ENCODE measurements at regions of chr6 and their contacts with region 1.

Region 1: DNA sequence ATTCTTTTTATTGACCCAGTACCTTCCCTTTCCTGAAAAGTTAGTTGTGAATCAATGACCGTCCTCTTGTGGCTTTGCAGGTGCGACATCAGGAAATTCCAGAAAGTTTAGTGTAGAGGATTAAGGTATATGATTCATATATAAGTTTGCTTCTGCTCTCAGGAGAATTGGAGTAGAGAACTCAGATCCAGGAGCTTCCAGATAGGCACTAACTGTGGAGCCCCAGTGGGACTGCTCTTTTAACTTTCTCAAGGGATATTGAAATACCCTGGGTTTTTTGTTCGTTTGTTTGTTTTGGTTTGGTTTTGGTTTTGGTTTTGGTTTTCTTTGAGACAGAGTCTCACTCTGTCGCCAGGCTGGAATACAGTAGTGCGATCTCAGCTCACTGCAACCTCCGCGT is 9.5 kb downstream of the TAAR2 start:
- DNase-seq: peak; percentile 57
- H3K4me3 Mint-ChIP-seq: peak overlapping the region; percentile 77
- H3K27ac Mint-ChIP-seq: peak overlapping the region; percentile 98
- H3K4me1 Mint-ChIP-seq: peaks cover 54% of the 10 kb centered on the region
- H3K27me3 Mint-ChIP-seq: no peaks in the 10 kb centered on the region
- CTCF ChIP-seq: no peak

Region 2: GRCh38 chr6:132530293-132530974 is 84.1 kb before region 1 on chr6:
- CTCF ChIA-PET with region 1: interaction called, 7 read pairs
- intact Hi-C with region 1: loop called (anchors 5 kb)
- DNase-seq: peak; percentile 76
- H3K4me3 Mint-ChIP-seq: peak overlapping the region; percentile 37
- H3K27ac Mint-ChIP-seq: peak overlapping the region; percentile 50
- H3K4me1 Mint-ChIP-seq: no peaks in the 10 kb centered on the region
- H3K27me3 Mint-ChIP-seq: no peaks in the 10 kb centered on the region
- CTCF ChIP-seq: peak; percentile 64

Region 3: DNA sequence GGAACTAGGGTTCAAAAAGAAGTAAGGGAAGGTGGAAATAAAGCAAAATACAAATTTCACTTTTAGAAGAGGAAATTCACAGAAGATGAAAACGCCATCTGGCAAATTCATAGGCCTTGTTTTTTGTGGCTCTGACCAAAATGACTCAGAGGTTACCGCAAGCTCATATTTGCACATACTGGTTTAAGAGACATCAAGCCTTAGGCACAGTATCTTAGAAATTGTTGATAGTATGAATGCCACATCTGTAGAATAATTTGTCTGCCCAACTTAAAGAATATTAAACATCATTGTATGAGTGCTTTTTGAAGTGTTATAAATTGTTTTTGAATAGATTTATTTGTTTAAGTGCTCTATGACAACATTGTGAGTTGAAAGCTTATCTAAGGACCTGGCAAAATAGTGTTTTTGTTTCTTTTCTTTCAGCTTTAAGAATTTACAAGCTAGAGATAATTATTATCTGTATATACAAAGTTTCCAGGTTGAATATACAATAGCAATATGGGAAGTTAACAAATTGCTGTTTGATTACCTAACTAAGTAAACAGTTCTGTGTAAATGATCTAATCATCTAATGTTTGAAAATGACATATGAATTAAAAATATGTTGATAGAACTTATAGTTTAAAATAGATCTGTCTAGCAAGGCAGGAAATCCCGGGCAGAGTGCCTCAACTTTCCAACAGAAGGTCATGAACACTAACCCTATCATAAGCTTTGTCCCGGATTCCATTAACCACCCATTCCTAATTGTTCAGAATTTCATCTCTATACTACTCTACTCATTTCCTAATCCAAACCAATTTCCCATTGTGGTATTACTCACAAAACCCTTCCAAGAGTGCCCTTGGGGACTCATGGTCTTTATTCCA is 34.0 kb after region 1 on chr6:
- CTCF ChIA-PET with region 1: no interaction called
- intact Hi-C with region 1: loop called (anchors 5 kb)
- DNase-seq: peak; percentile 22
- H3K4me3 Mint-ChIP-seq: no peak overlapping the region
- H3K27ac Mint-ChIP-seq: peak overlapping the region; percentile 66
- H3K4me1 Mint-ChIP-seq: no peaks in the 10 kb centered on the region
- H3K27me3 Mint-ChIP-seq: no peaks in the 10 kb centered on the region
- CTCF ChIP-seq: no peak

Region 4: DNA sequence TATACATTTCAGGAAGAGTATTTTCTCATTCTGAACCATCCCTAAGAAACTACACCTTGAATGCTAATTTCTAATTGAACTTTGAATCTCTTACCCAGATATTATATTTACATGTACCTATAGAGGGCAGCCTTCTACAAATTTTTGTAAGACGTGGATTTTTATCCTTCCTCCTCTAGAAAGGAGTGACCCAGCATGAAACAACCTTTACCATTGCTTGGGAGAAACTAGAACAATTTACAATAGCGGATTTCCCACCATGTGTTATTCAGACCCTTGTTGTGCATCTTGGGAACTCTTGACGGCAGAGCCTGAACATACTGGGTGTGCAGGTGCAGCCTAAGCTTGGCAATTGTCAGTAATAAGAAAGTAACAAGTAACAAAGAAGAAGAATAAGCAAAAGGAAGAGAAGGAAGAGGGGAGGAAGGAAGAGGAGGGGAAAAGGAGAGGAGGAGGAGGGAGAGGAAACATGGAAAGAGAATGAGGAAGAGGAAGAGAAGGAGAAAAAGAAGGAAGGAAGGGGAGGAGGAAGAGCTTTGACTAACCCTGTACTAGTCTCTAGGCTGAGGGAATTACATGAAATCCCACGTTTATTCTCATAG is 55.2 kb after region 1 on chr6:
- CTCF ChIA-PET with region 1: no interaction called
- intact Hi-C with region 1: loop called (anchors 5 kb)
- DNase-seq: no peak
- H3K4me3 Mint-ChIP-seq: no peak overlapping the region
- H3K27ac Mint-ChIP-seq: peak overlapping the region; percentile 59
- H3K4me1 Mint-ChIP-seq: peaks cover 54% of the 10 kb centered on the region
- H3K27me3 Mint-ChIP-seq: no peaks in the 10 kb centered on the region
- CTCF ChIP-seq: peak; percentile 30

Region 5: GRCh38 chr6:132687306-132687705 is 72.8 kb after region 1 on chr6:
- CTCF ChIA-PET with region 1: no interaction called
- intact Hi-C with region 1: loop called (anchors 5 kb)
- DNase-seq: peak; percentile 28
- H3K4me3 Mint-ChIP-seq: peak overlapping the region; percentile 53
- H3K27ac Mint-ChIP-seq: peak overlapping the region; percentile 96
- H3K4me1 Mint-ChIP-seq: peaks cover 53% of the 10 kb centered on the region
- H3K27me3 Mint-ChIP-seq: no peaks in the 10 kb centered on the region
- CTCF ChIP-seq: no peak

Region 6: GRCh38 chr6:132715204-132715603 is 100.7 kb after region 1 on chr6:
- CTCF ChIA-PET with region 1: interaction called, 6 read pairs
- intact Hi-C with region 1: loop called (anchors 10 kb)
- DNase-seq: peak; percentile 75
- H3K4me3 Mint-ChIP-seq: no peak overlapping the region
- H3K27ac Mint-ChIP-seq: peak overlapping the region; percentile 61
- H3K4me1 Mint-ChIP-seq: peaks cover 68% of the 10 kb centered on the region
- H3K27me3 Mint-ChIP-seq: no peaks in the 10 kb centered on the region
- CTCF ChIP-seq: peak; percentile 58

Region 7: DNA sequence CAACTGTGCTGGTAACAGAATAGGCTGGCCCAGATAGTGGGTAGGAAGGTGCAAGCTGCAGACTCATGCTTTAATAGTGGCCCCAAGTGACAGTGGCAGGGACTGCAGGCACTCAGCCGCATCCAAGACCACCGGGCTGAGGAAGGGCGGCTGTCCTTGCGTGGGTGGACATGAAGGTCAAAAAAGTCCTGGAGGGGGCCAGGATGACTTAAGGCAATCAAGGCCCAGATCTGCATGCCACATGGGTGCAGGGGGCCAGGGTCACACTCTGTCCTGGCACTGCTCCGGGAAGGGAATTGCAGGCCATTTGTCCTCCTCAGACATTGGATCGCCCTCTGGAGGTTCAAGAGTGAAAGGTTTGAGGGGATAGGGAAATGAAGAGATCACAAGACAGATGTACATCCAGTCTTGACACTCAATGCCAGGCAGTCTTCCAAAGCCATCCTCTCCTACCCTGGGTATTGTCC is 153.5 kb after region 1 on chr6:
- CTCF ChIA-PET with region 1: no interaction called
- intact Hi-C with region 1: loop called (anchors 5 kb)
- DNase-seq: peak; percentile 68
- H3K4me3 Mint-ChIP-seq: peak overlapping the region; percentile 43
- H3K27ac Mint-ChIP-seq: peak overlapping the region; percentile 9
- H3K4me1 Mint-ChIP-seq: peaks cover 32% of the 10 kb centered on the region
- H3K27me3 Mint-ChIP-seq: no peaks in the 10 kb centered on the region
- CTCF ChIP-seq: peak; percentile 95